ENCODE measurements at regions of chr1 and their contacts with region 1.

Region 1: DNA sequence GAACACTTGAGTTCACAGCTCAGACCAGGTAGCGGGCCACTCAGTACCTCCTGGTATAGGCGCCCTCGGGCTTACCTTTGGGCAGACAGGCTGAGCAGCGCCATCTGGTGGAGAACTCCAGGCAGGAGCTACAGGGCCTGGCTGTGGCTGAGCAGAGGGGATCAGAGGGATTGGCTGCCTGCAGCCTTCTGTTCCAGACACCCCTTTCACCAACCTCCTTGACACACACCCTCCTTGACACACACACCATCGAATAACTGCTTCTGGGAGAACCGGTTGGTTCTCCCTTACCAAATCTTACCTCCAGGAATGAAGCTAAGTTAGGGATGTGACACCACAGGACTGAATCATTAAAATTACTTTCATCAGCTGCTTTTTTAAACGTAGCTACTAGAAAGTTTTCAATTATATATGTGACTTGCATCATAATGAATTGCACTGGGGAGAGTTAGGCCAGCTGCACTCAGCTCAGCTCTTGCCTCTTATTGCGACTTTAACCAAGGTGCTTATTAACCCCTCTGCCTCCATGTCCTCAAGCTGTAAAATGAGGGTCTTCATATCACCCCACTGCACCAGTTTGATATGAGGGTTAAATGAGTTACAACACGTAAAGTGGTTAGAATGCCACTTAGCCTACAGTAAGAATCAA is 6.6 kb downstream of the LIN28A start:
- DNase-seq: peak; percentile 85
- H3K4me3 ChIP-seq: no peak overlapping the region
- H3K27ac ChIP-seq: no peak overlapping the region
- H3K4me1 ChIP-seq: no peaks in the 10 kb centered on the region
- H3K27me3 ChIP-seq: peaks cover 5% of the 10 kb centered on the region
- CTCF ChIP-seq: peak; percentile 81
- EP300 ChIP-seq: no peak
- RAD21 ChIP-seq: peak; percentile 69

Region 2: GRCh38 chr1:26203642-26204318 is 213.5 kb before region 1 on chr1:
- CTCF ChIA-PET with region 1: no interaction called
- POLR2A ChIA-PET with region 1: no interaction called
- DNase-seq: no peak
- H3K4me3 ChIP-seq: no peak overlapping the region
- H3K27ac ChIP-seq: no peak overlapping the region
- H3K4me1 ChIP-seq: no peaks in the 10 kb centered on the region
- H3K27me3 ChIP-seq: no peaks in the 10 kb centered on the region; the same call in 1 of the 2 replicates
- CTCF ChIP-seq: no peak
- EP300 ChIP-seq: no peak
- RAD21 ChIP-seq: no peak

Region 3: DNA sequence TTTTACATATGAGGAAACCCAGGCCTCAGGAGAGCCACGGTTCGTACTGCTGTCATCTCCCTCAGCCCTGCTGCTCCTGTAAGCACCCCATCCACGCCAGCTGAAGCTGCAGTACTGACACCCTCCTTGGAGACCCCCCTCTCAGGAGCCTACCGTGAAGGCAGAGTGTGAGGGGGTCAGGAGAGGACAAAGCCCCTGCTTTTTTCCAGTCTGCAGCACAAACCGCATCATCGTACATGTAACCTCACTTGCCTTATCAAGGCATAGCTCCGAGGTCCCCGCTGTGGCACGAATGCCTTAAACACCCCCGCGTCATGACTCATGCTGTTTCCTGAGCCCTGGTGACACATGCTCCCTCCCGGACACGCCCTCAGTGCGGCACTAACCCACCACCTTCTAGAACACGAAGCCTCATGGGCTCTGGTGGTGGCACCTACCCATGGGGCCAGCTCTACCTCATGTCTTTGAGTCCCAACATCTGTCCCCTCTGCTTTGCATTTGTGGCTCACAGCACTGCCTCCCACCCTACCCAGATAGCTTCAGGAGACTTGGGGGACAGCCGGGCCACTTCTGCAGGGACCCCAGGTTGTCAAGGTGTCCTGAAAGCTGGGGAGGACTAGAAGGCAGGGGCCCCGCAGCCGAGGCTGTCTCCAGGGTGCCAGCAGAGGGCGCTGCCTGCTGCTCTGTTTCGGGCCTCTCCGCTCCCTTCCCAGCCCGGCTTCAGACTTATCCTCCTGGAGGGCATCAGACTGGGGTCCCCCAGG is 132.5 kb before region 1 on chr1:
- CTCF ChIA-PET with region 1: interaction called, 25 read pairs
- POLR2A ChIA-PET with region 1: no interaction called
- DNase-seq: peak; percentile 84
- H3K4me3 ChIP-seq: no peak overlapping the region; a peak in 1 of 4 replicates
- H3K27ac ChIP-seq: peak overlapping the region in 1 of 2 experiments; percentile 50; a peak in 2 of 4 replicates
- H3K4me1 ChIP-seq: peaks cover 28 to 33% of the 10 kb centered on the region in 2 experiments; a peak in 3 of 4 replicates
- H3K27me3 ChIP-seq: no peaks in the 10 kb centered on the region
- CTCF ChIP-seq: peak; percentile 75
- EP300 ChIP-seq: no peak
- RAD21 ChIP-seq: peak; percentile 66

Region 4: GRCh38 chr1:26378088-26378878 is 39.0 kb before region 1 on chr1:
- CTCF ChIA-PET with region 1: interaction called, 11 read pairs
- POLR2A ChIA-PET with region 1: no interaction called
- DNase-seq: no peak
- H3K4me3 ChIP-seq: no peak overlapping the region
- H3K27ac ChIP-seq: peak overlapping the region; percentile 11 to 86; a peak in 3 of 4 replicates
- H3K4me1 ChIP-seq: peaks cover 0 to 6% of the 10 kb centered on the region in 2 experiments; a peak in 2 of 4 replicates
- H3K27me3 ChIP-seq: no peaks in the 10 kb centered on the region
- CTCF ChIP-seq: no peak
- EP300 ChIP-seq: peak in 1 of 2 experiments; percentile 29; a peak in 2 of 4 replicates
- RAD21 ChIP-seq: no peak

Region 5: DNA sequence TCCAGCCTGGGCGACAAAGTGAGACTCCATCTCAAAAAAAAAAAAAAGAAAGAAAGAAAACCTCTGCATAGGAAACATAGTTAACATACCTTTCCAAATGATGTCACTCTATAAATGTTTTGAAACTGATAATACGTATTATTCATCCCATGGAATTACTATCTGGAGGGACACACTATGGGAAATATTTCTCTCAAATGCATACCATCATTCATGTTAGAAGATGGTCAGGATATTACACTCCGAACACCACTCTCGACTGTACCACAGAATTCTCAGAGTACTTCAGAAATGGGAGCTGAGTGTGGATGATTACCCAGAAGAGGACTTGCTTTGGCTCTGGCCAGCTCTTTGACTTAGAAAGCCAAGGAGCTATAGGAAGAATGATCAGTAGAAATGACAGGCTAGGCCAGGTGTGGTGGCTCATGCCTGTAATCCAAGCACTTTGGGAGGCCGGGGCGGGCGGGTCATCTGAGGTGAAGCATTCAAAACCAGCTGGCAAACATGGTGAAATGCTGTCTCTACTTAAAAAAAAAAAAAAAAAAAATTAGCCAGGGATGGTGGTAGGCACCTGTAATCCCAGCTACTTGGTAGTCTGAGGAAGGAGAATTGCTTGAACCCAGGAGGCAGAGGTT is 11.8 kb before region 1 on chr1:
- CTCF ChIA-PET with region 1: interaction called, 34 read pairs
- POLR2A ChIA-PET with region 1: no interaction called
- DNase-seq: no peak
- H3K4me3 ChIP-seq: peak overlapping the region in 1 of 2 experiments; percentile 23; a peak in 1 of 4 replicates
- H3K27ac ChIP-seq: peak overlapping the region in 1 of 2 experiments; percentile 49; a peak in 2 of 4 replicates
- H3K4me1 ChIP-seq: peaks cover 0 to 7% of the 10 kb centered on the region in 2 experiments; a peak in 1 of 4 replicates
- H3K27me3 ChIP-seq: no peaks in the 10 kb centered on the region
- CTCF ChIP-seq: no peak
- EP300 ChIP-seq: no peak
- RAD21 ChIP-seq: no peak

Region 6: GRCh38 chr1:26477446-26478152 is 60.4 kb after region 1 on chr1:
- CTCF ChIA-PET with region 1: no interaction called
- POLR2A ChIA-PET with region 1: no interaction called
- DNase-seq: no peak
- H3K4me3 ChIP-seq: no peak overlapping the region
- H3K27ac ChIP-seq: no peak overlapping the region
- H3K4me1 ChIP-seq: peaks cover 10 to 11% of the 10 kb centered on the region in 2 experiments; a peak in 3 of 4 replicates
- H3K27me3 ChIP-seq: no peaks in the 10 kb centered on the region
- CTCF ChIP-seq: no peak
- EP300 ChIP-seq: no peak
- RAD21 ChIP-seq: no peak

Measured in SK-N-SH (cell line).